ENCODE measurements at regions of chr9 and their contacts with region 1.

Region 1: DNA sequence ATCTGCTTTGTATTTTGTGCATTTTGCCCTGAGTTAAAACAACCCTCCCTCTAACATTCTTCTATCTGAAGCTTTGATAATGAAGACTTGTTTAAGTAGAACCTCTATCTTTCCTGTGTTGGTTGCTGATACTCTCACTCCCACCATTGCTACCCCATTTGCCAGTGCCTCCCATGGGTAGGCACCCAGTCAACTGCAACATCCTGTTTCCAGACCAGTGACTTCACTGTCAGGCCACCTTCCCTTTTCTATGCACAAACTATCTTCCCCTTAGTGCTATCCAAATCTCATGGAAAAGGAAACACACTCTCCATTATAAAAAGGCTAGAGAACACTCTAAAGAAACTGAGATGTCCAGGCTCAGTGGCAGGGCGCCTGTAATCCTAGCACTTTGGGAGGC is 5.6 kb upstream of the IARS1 start:
- DNase-seq: no peak
- H3K4me3 Mint-ChIP-seq: no peak overlapping the region
- H3K27ac Mint-ChIP-seq: peak overlapping the region; percentile 58
- H3K4me1 Mint-ChIP-seq: peaks cover 36% of the 10 kb centered on the region
- H3K27me3 Mint-ChIP-seq: no peaks in the 10 kb centered on the region

Region 2: GRCh38 chr9:91945277-91946085 is 353.6 kb before region 1 on chr9:
- CTCF ChIA-PET with region 1: no interaction called
- POLR2A ChIA-PET with region 1: no interaction called
- intact Hi-C with region 1: no loop called
- DNase-seq: no peak
- H3K4me3 Mint-ChIP-seq: no peak overlapping the region
- H3K27ac Mint-ChIP-seq: no peak overlapping the region
- H3K4me1 Mint-ChIP-seq: peaks cover 2% of the 10 kb centered on the region
- H3K27me3 Mint-ChIP-seq: peaks cover 37% of the 10 kb centered on the region

Region 3: GRCh38 chr9:92315456-92315855 is 16.3 kb after region 1 on chr9:
- CTCF ChIA-PET with region 1: no interaction called
- POLR2A ChIA-PET with region 1: no interaction called
- intact Hi-C with region 1: loop called (anchors 2 kb)
- DNase-seq: no peak
- H3K4me3 Mint-ChIP-seq: no peak overlapping the region
- H3K27ac Mint-ChIP-seq: peak overlapping the region; percentile 83
- H3K4me1 Mint-ChIP-seq: peaks cover 45% of the 10 kb centered on the region
- H3K27me3 Mint-ChIP-seq: no peaks in the 10 kb centered on the region

Region 4: GRCh38 chr9:92482329-92482728 is 183.2 kb after region 1 on chr9 and contains the start of gene ASPN:
- CTCF ChIA-PET with region 1: no interaction called
- POLR2A ChIA-PET with region 1: no interaction called
- intact Hi-C with region 1: no loop called
- DNase-seq: no peak
- H3K4me3 Mint-ChIP-seq: no peak within 1 kb of the TSS
- H3K27ac Mint-ChIP-seq: no peak within 1 kb of the TSS
- H3K4me1 Mint-ChIP-seq: peaks cover 5% of the 10 kb centered on the region
- H3K27me3 Mint-ChIP-seq: no peaks in the 10 kb centered on the region
- total RNA-seq, gene ASPN: not detected

Measured in activated CD4-positive, alpha-beta memory T cell treated with anti-CD3 and anti-CD28 coated beads for 36 hours (primary cell).